ENCODE measurements at regions of chr17 and their contacts with region 1.

Region 1: DNA sequence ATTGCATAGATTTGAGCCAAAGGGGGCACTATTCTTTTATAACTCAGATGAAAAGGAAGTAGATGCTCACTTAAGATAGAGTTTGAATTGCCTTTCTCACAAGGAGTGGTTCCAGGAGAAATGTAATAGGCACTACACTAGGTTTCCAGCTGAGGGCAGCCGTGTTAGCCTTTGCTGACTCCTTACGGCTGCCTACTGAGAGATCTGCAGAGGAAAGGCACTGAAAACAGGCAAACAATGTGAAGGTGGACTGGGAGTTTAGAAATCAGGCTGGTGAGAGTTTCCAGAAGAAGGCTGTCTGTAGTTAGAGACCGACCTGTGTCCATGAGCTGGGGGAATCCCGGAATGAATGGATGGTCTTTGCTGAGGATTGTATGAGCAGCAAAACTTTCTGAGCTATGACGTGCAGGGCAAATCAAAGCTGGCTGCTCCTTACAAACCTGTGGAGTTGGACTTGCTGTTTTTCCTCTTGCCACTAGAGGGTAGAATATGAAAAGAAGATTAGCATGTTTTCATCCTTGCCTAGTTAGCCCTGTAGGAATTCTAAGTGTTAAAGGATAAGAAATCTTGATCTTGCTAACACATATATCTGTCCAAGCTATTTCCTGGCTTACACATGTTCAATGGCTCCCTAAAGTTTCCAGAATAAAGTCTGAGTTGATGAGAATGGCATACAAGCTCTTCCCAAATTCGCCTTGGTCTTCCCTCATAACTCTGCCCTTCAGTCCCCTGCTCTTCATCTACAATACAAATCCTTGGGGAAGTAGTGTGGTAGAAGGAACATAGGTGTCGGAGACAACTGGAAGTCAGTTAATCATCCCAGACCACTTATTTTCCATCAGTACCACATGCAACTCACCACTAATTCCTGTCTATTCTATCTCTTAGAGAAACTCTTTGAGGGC is 20.1 kb upstream of the TAOK1 start:
- DNase-seq: peak; percentile 18
- H3K4me3 Mint-ChIP-seq: no peak overlapping the region
- H3K27ac Mint-ChIP-seq: no peak overlapping the region
- H3K4me1 Mint-ChIP-seq: no peaks in the 10 kb centered on the region
- H3K27me3 Mint-ChIP-seq: no peaks in the 10 kb centered on the region

Region 2: GRCh38 chr17:29533976-29534375 is 163.9 kb after region 1 on chr17:
- intact Hi-C with region 1: loop called (anchors 1 kb)
- DNase-seq: no peak
- H3K4me3 Mint-ChIP-seq: no peak overlapping the region
- H3K27ac Mint-ChIP-seq: no peak overlapping the region
- H3K4me1 Mint-ChIP-seq: no peaks in the 10 kb centered on the region
- H3K27me3 Mint-ChIP-seq: no peaks in the 10 kb centered on the region